ENCODE measurements at regions of chr5 and their contacts with region 1.

Region 1: DNA sequence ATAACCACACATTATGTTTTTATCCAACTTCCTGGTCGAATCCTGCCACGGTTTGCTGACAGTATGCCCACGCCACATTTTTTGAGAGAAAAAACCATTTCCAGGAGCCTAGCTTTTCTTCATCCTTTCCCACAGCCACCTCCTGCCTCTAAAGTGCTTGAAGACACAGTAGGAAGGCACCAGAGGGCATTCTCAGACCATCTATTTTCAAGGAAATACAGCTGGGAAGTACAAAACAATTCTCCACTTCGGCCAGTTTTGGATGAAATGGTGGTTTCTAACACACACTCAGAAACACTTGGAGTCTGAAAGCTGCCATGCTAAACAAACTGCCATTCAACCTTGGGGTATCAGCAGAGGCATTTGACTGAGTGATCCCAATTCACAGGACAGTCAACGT is 86.3 kb upstream of the RPS23 start:
- DNase-seq: no peak
- ATAC-seq: peak in 3 of 4 donors; percentile 82 to 86 (median 84)
- H3K4me3 ChIP-seq: no peak overlapping the region
- H3K27ac ChIP-seq: peak overlapping the region in 1 of 12 donors; percentile 44
- H3K4me1 ChIP-seq: peaks cover 0 to 15% (median 2%) of the 10 kb centered on the region in 12 donors
- H3K27me3 ChIP-seq: no peaks in the 10 kb centered on the region
- CTCF ChIP-seq: peak in 11 of 12 donors; percentile 16 to 61 (median 43)
- POLR2A ChIP-seq: no peak

Region 2: DNA sequence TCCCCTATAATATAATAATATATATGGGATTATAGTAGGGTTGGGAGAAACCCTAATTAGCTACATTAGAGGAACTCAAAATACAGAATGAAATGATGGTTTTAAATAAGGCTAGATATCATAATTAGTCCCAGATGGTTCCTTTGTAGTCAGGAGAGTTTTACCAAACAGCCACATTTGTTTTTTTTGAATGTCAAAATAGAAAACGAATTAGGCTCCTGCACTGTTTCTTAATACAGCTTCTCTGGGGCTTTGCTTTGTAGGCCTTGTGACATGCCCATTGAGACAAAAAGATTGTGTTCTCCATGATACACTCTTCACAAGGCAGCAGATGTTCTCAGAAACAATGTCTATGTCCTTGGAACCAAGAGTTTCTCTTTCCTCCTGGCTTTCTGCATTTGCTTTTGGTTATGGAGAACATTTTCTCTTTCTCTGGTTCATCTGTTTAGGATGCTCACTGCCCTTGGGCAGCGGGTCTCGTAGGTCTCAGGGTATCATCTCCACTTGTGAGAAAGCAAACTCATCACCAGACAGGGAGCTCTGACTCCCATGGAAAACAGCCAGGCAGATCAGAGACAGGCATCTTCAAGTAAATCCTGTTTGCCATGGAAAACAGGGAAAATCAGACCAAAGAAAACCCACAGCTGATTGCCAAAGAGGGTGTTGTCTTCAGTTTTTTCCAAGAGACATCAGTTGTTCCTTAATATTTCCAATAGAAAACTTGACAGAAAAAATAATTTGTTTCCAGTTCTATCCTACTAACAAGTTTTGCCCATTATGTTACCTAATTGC is 32.2 kb before region 1 on chr5:
- intact Hi-C with region 1: no loop called
- DNase-seq: no peak
- ATAC-seq: no peak
- H3K4me3 ChIP-seq: no peak overlapping the region
- H3K27ac ChIP-seq: peak overlapping the region in 7 of 12 donors; percentile 14 to 92 (median 64)
- H3K4me1 ChIP-seq: peaks cover 0 to 67% (median 14%) of the 10 kb centered on the region in 12 donors
- H3K27me3 ChIP-seq: no peaks in the 10 kb centered on the region
- CTCF ChIP-seq: no peak
- POLR2A ChIP-seq: no peak

Region 3: DNA sequence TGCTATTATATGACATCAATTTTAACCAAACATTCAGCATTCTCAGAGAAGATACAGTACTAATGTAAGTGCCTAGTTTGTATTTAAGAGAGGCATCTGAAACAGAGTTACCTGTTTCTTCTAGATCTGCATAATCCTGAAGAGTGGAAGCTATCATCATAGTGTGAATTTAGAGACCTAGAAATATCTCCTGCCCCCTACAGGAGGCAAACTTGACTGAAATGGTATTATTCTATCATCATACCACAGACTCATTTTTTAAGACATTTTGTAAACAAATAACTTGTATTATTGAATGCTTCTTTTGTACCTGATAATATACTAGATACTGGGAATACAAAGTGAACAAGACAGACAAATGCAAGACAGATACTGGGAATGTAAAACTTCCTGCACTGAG is 130.4 kb after region 1 on chr5:
- intact Hi-C with region 1: loop called in 2 of 10 experiments (anchors 10 kb)
- DNase-seq: no peak
- ATAC-seq: no peak
- H3K4me3 ChIP-seq: no peak overlapping the region
- H3K27ac ChIP-seq: no peak overlapping the region
- H3K4me1 ChIP-seq: no peaks in the 10 kb centered on the region
- H3K27me3 ChIP-seq: no peaks in the 10 kb centered on the region
- CTCF ChIP-seq: peak in 5 of 12 donors; percentile 6 to 29 (median 24)
- POLR2A ChIP-seq: no peak